GM23248 (cell line): ENCODE measurements at regions of chr13 and their contacts with region 1.

Region 1: GRCh38 chr13:60467098-60467497 is 70.1 kb downstream of the TDRD3 start:
- DNase-seq: no peak
- H3K4me3 ChIP-seq: no peak overlapping the region
- H3K27ac ChIP-seq: no peak overlapping the region
- H3K4me1 ChIP-seq: no peaks in the 10 kb centered on the region
- H3K27me3 ChIP-seq: no peaks in the 10 kb centered on the region

Region 2: DNA sequence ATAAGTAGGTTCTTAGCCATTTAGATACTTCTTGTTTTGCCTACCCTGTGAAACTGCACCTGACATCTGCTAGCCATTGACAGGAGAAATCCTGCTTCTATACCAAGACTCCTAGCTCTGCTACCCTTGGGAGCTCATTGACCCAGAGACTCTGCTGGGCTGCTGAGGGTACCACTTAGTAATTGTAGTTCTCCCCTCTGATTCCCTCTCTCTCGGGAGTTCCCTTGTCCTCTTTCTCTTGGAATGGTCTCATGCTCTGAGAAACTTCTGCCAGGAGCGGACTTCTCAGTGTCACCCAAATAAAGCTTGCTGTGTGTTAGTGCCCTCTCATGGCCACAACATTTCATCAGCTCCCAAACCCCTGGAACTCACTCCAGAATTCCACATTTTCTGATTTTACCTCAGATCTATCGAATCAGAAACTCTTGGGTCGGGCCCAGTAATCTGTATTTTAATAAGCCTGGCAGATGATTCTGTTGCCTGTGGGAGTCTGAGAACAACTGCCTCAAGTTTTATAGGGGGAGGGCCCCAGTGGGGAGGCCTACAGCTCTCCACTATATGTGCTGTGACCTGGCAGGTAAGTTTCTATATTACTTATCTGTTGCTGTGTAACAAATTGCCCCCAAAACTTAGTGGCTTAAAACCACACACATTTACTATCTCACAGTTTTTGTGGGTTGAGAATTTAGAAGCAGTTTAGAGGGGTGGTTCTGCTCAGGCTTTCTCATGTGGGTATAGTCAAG is 151.1 kb after region 1 on chr13:
- in situ Hi-C with region 1: loop called (anchors 5 kb)
- DNase-seq: peak; percentile 68
- H3K4me3 ChIP-seq: no peak overlapping the region
- H3K27ac ChIP-seq: no peak overlapping the region
- H3K4me1 ChIP-seq: peaks cover 7% of the 10 kb centered on the region; the same call in 1 of the 2 replicates
- H3K27me3 ChIP-seq: peaks cover 61% of the 10 kb centered on the region